Activated CD4-positive, alpha-beta memory T cell treated with anti-CD3 and anti-CD28 coated beads, Interleukin-2, amount 10 ng/mL, durations not matched to agents 7 days and 5 days (primary cell): ENCODE measurements at regions of chr12 and their contacts with region 1.

Region 1: GRCh38 chr12:102484428-102484958 is 4.1 kb upstream of the IGF1 start:
- DNase-seq: peak; percentile 56
- H3K4me3 Mint-ChIP-seq: peak overlapping the region; percentile 40
- H3K27ac Mint-ChIP-seq: peak overlapping the region; percentile 70
- H3K4me1 Mint-ChIP-seq: peaks cover 27% of the 10 kb centered on the region
- H3K27me3 Mint-ChIP-seq: no peaks in the 10 kb centered on the region

Region 2: DNA sequence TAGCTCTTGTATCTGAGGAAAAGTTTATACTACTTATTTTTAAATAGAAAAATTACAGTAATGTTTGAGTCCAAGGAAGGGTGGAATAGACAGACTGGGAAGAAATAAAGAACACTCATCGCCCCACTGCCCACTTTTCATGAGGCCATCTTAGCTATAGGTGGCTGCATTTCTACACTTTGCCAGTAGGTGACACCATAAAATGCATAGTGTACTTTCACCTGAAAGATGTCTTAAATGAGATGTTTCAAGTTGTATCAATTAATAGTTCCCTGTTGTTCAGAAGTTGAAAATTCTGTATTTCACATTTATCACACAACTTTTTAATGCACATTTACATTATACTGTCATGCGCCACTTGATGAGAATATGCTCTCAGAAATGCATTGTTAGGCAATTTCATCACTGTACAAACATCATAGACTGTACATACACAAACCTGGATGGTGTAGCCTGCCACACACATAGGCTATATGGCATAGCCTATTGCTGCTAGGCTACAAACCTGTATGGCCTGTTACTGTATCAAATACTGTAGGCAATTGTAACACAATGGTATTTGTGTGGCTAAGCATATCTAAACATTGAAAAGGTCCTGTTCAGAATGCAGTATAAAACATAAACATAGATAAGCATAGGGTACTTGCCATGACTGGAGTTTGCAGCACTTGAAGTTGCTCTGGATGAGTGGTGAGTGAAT is 314.4 kb before region 1 on chr12:
- CTCF ChIA-PET with region 1: interaction called, 16 read pairs
- POLR2A ChIA-PET with region 1: no interaction called
- DNase-seq: no peak
- H3K4me3 Mint-ChIP-seq: no peak overlapping the region
- H3K27ac Mint-ChIP-seq: no peak overlapping the region
- H3K4me1 Mint-ChIP-seq: peaks cover 23% of the 10 kb centered on the region
- H3K27me3 Mint-ChIP-seq: no peaks in the 10 kb centered on the region

Region 3: GRCh38 chr12:102462795-102463465 is 21.6 kb before region 1 on chr12:
- CTCF ChIA-PET with region 1: interaction called, 13 read pairs
- POLR2A ChIA-PET with region 1: no interaction called
- DNase-seq: no peak
- H3K4me3 Mint-ChIP-seq: no peak overlapping the region
- H3K27ac Mint-ChIP-seq: no peak overlapping the region
- H3K4me1 Mint-ChIP-seq: no peaks in the 10 kb centered on the region
- H3K27me3 Mint-ChIP-seq: peaks cover 22% of the 10 kb centered on the region

Region 4: DNA sequence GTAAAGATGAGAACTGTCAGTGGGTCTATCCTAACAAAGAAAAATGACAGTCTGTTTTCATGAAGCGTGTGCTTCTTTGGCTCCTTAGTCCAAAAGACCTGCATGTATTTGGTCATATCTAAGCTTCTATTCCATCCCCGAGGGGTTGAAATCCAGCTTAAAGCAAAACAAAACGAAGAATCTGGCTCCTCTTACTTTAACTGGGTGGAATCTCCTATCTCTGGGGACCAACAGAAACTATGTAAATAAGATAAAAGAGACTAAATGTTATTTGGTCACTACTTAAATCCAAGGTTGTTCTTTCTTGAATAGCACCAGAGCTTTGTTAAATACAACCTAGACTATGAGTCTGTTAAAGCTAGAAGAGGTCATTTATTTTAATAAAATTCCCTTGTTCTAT is 13.5 kb before region 1 on chr12:
- CTCF ChIA-PET with region 1: interaction called, 22 read pairs
- POLR2A ChIA-PET with region 1: no interaction called
- DNase-seq: no peak
- H3K4me3 Mint-ChIP-seq: no peak overlapping the region
- H3K27ac Mint-ChIP-seq: no peak overlapping the region
- H3K4me1 Mint-ChIP-seq: peaks cover 15% of the 10 kb centered on the region
- H3K27me3 Mint-ChIP-seq: peaks cover 14% of the 10 kb centered on the region